ENCODE measurements at regions of chr6 and their contacts with region 1.

Region 1: GRCh38 chr6:35415065-35415991 is 36.8 kb upstream of the FANCE start:
- DNase-seq: peak in 4 of 5 donors; percentile 26 to 33 (median 30)
- H3K4me3 ChIP-seq: no peak overlapping the region
- H3K4me3 Mint-ChIP-seq: peak overlapping the region in 1 of 8 donors; percentile 1
- H3K27ac ChIP-seq: no peak overlapping the region
- H3K27ac Mint-ChIP-seq: peak overlapping the region; percentile 26 to 81 (median 74)
- H3K4me1 ChIP-seq: peaks cover 35% of the 10 kb centered on the region
- H3K4me1 Mint-ChIP-seq: peaks cover 31 to 71% (median 48%) of the 10 kb centered on the region in 4 donors
- H3K27me3 ChIP-seq: no peaks in the 10 kb centered on the region
- H3K27me3 Mint-ChIP-seq: no peaks in the 10 kb centered on the region

Region 2: DNA sequence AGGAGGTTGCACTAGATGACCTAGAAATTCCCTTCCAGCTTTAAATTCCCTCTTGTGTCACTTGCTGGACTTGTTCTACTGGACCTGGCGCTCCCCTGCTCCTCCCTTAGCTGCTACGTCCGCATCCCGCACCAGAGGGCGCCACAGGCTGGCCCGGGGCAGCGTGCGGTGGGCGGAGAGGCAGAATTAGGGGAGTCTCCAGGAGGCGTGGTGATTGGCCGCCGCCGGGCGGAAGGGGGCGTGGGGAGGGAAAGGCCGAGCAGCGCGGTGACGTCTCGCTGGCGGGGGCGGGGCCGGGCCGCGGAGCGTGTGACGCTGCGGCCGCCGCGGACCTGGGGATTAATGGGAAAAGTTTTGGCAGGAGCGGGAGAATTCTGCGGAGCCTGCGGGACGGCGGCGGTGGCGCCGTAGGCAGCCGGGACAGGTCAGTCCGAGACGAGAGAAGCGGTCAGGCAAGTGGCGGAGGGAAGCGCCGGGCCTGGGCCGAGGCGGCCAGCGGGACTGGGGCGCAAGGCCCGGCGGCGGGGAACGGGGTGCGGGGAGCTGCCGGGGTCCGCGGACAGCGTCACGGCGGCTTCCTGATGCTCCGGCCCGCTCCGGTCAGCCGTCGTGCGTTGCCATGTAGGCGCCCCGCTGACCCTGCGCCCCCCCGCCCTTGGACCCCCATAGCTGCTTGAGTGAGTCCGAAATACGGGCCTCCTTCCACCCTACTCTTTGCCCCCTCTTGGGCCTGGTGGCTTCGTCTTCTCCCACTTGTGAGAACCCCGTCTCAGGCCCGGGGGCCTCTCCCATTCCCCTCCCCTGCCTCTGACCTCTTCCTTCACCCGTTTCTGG is 72.9 kb before region 1 on chr6 and contains the start of gene PPARD:
- CTCF ChIA-PET with region 1: interaction called, 55 read pairs
- POLR2A ChIA-PET with region 1: interaction called, 10 read pairs
- intact Hi-C with region 1: loop called (anchors 1 kb)
- DNase-seq: peak; percentile 94 to 98 (median 95)
- H3K4me3 ChIP-seq: peak within 1 kb of the TSS; percentile 50 to 97
- H3K4me3 Mint-ChIP-seq: peak within 1 kb of the TSS; percentile 87 to 99 (median 96)
- H3K27ac ChIP-seq: peak within 1 kb of the TSS; percentile 86
- H3K27ac Mint-ChIP-seq: peak within 1 kb of the TSS; percentile 87 to 99 (median 96)
- H3K4me1 ChIP-seq: peaks cover 52% of the 10 kb centered on the region
- H3K4me1 Mint-ChIP-seq: peaks cover 37 to 60% (median 51%) of the 10 kb centered on the region in 4 donors
- H3K27me3 ChIP-seq: no peaks in the 10 kb centered on the region
- H3K27me3 Mint-ChIP-seq: no peaks in the 10 kb centered on the region
- total RNA-seq, gene PPARD: 37.2 to 38.7 TPM

Region 3: DNA sequence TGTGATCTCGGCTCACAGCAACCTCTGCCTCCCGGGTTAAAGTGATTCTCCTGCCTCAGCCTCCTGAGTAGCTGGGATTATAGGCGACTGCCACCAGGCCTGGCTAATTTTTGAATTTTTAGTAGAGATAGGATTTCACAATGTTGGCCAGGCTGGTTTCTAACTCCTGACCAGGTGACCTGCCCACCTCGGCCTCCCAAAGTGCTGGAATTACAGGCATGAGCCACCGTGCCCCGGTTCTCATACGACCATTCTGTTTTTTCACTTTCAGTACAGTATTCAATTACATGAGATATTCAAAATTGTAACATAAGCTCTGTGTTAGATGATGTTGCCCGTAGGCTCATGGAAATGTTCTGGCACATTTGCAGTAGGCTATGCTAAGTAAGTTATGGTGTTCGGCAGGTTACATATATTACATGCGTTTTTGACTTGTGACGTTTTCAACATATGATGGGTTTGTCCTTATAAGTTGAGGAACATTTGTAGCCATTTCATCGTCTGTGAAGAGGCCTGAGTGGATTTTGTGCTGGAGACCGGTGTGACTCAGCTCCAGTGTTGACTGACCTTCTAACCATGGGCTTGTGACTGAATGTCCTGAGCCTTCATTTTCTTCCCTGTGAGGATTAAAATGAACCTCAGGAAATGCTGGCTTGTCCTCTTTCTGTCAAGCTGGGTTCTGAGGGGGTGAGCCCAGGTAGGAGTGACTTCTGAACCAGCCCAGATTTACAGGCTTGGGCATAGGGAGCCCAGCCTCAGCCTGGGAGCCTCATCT is 60.8 kb before region 1 on chr6:
- CTCF ChIA-PET with region 1: interaction called, 9 read pairs
- POLR2A ChIA-PET with region 1: no interaction called
- intact Hi-C with region 1: loop called (anchors 1 kb)
- DNase-seq: no peak
- H3K4me3 ChIP-seq: no peak overlapping the region
- H3K4me3 Mint-ChIP-seq: no peak overlapping the region
- H3K27ac ChIP-seq: no peak overlapping the region
- H3K27ac Mint-ChIP-seq: peak overlapping the region in 2 of 7 donors; percentile 37 to 66
- H3K4me1 ChIP-seq: peaks cover 22% of the 10 kb centered on the region
- H3K4me1 Mint-ChIP-seq: peaks cover 39 to 75% (median 50%) of the 10 kb centered on the region in 4 donors
- H3K27me3 ChIP-seq: no peaks in the 10 kb centered on the region
- H3K27me3 Mint-ChIP-seq: no peaks in the 10 kb centered on the region

Region 4: GRCh38 chr6:35445696-35446095 is 30.4 kb after region 1 on chr6:
- CTCF ChIA-PET with region 1: interaction called, 54 read pairs
- POLR2A ChIA-PET with region 1: interaction called, 3 read pairs
- intact Hi-C with region 1: loop called (anchors 1 kb)
- DNase-seq: peak in 1 of 5 donors; percentile 14
- H3K4me3 ChIP-seq: no peak overlapping the region
- H3K4me3 Mint-ChIP-seq: no peak overlapping the region
- H3K27ac ChIP-seq: no peak overlapping the region
- H3K27ac Mint-ChIP-seq: peak overlapping the region in 4 of 7 donors; percentile 35 to 57 (median 42)
- H3K4me1 ChIP-seq: peaks cover 15% of the 10 kb centered on the region
- H3K4me1 Mint-ChIP-seq: peaks cover 4 to 27% (median 15%) of the 10 kb centered on the region in 4 donors
- H3K27me3 ChIP-seq: no peaks in the 10 kb centered on the region
- H3K27me3 Mint-ChIP-seq: no peaks in the 10 kb centered on the region

Region 5: GRCh38 chr6:35452186-35453090 is 37.1 kb after region 1 on chr6 and contains the start of gene FANCE:
- CTCF ChIA-PET with region 1: interaction called, 54 read pairs
- POLR2A ChIA-PET with region 1: interaction called, 3 read pairs
- intact Hi-C with region 1: loop called (anchors 1 kb)
- DNase-seq: peak; percentile 77 to 90 (median 81)
- H3K4me3 ChIP-seq: peak within 1 kb of the TSS; percentile 0 to 66
- H3K4me3 Mint-ChIP-seq: peak within 1 kb of the TSS; percentile 84 to 91 (median 87)
- H3K27ac ChIP-seq: peak within 1 kb of the TSS; percentile 59
- H3K27ac Mint-ChIP-seq: peak within 1 kb of the TSS; percentile 54 to 94 (median 89)
- H3K4me1 ChIP-seq: peaks cover 40% of the 10 kb centered on the region
- H3K4me1 Mint-ChIP-seq: peaks cover 29 to 53% (median 39%) of the 10 kb centered on the region in 4 donors
- H3K27me3 ChIP-seq: no peaks in the 10 kb centered on the region
- H3K27me3 Mint-ChIP-seq: no peaks in the 10 kb centered on the region
- total RNA-seq, gene FANCE: 8.9 to 9.0 TPM

Measured in CD4-positive, alpha-beta memory T cell (primary cell).